AG04449 (cell line): ENCODE measurements at regions of chr9 and their contacts with region 1.

Region 1: DNA sequence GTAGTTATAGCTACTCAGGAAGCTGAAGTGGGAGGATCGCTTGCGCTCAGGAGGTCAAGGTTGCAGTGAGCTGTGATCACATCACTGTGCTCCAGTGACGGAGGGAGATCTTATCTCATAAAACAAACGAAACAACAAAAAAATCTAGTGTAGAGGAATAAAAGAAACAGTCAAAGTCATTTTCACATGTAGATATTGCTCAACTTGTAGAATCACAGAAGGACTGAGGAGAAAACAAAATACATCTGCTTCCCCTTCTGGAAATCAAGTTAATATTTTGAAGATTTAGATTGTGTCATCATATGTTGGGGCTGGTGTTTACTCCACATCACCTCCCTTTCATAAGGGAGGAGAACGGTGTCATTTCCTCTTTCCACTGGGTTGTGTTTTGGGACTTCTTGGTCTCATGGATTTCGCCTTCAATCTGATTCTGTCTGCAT is 8.2 kb upstream of the SLC46A2 start:
- DNase-seq: no peak
- H3K4me3 ChIP-seq: no peak overlapping the region
- CTCF ChIP-seq: no peak

Region 2: GRCh38 chr9:112717661-112718341 is 181.1 kb before region 1 on chr9 and contains the start of gene INIP:
- CTCF ChIA-PET with region 1: interaction called, 16 read pairs
- POLR2A ChIA-PET with region 1: no interaction called
- DNase-seq: peak; percentile 65
- H3K4me3 ChIP-seq: peak within 1 kb of the TSS; percentile 95
- CTCF ChIP-seq: no peak

Region 3: DNA sequence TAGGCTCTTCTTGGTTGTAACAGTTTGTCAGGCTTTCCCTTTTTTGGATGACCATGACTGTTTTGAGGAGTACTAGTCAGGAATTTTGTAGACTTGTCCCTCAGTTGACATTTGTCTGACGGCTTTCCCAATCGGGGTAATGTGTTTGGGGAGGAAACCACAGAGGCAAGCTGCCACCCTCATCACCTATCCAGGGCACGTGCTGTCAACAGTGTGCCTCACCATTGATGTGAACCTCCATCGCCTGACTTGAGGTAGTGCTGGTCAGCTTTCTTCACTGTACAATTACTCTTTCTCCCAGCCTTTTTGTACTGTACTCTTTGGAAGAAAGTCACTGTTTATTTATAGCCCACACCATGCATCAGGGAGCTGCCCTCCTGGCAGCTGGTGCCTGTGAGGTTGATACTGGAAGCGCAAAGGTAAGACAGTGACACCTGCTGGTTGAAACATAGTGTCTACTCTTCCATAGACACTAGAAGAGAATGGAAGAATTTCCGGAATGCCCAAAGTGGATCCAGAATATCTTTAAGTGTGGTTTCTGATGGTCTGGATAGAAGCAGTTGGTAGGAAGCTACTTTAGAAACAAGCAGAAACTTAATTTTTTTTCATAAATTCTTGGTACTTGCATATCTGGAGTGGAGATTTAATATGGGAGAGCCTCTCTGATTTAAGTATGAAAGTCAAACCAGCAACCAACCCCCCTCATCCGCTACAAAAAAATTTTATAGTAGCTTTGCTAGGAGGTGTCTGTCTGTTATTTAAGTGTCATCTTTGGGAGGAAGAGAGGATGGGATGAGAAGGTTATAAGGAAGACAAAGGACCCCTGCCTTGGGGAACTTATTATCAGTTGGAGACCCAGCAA is 79.0 kb before region 1 on chr9:
- CTCF ChIA-PET with region 1: interaction called, 12 read pairs
- POLR2A ChIA-PET with region 1: no interaction called
- DNase-seq: peak; percentile 29
- H3K4me3 ChIP-seq: no peak overlapping the region
- CTCF ChIP-seq: peak; percentile 34

Region 4: DNA sequence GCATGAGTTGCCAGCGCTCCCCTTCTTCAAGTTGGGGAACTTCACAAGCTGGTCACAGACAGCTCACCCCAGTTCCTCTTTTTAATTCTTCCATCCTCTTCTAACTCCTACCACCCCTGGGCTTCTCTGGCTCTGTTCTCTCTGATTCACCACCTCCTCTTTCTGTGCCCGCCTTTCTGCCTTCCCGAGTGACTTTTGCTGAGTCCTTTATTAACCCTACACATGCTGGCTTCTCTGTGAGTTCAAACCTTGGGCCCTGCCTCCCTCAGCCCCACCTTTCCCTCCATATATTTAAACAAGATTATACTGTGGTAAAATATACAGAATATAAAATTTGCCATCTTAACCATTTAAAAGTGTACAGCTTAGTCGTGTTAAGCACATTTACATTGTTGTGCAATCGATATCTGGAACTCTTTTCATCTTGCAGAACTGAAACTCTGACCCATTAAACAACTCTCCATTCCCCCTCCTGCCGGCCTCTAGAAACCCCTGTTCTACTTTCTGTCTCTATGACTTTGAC is 40.2 kb before region 1 on chr9:
- CTCF ChIA-PET with region 1: interaction called, 19 read pairs
- POLR2A ChIA-PET with region 1: no interaction called
- DNase-seq: no peak
- H3K4me3 ChIP-seq: no peak overlapping the region
- CTCF ChIP-seq: no peak

Region 5: DNA sequence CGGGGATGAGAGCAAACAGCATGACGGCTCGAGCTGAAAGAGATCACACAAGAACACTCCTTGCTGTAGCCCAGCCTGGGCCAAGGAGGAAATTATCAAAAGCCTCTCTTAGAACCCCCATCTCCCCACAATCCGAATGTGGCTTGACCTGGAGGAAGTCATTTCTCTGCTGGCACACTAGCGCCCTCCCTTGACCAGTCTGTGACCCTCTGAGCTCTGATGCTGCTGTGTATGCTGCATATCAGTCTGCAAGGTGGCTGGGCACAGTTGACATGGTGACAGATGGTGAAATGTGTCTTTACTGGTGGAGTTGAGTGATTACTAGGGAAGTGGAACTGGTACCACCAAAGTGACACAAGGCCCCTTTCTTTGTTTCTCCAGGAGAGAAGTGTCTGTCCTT is 11.5 kb before region 1 on chr9:
- CTCF ChIA-PET with region 1: interaction called, 67 read pairs
- POLR2A ChIA-PET with region 1: no interaction called
- DNase-seq: no peak
- H3K4me3 ChIP-seq: no peak overlapping the region
- CTCF ChIP-seq: no peak

Region 6: GRCh38 chr9:112921549-112921948 is 22.7 kb after region 1 on chr9:
- CTCF ChIA-PET with region 1: interaction called, 49 read pairs
- POLR2A ChIA-PET with region 1: no interaction called
- DNase-seq: peak; percentile 23
- H3K4me3 ChIP-seq: no peak overlapping the region
- CTCF ChIP-seq: peak; percentile 51

Region 7: DNA sequence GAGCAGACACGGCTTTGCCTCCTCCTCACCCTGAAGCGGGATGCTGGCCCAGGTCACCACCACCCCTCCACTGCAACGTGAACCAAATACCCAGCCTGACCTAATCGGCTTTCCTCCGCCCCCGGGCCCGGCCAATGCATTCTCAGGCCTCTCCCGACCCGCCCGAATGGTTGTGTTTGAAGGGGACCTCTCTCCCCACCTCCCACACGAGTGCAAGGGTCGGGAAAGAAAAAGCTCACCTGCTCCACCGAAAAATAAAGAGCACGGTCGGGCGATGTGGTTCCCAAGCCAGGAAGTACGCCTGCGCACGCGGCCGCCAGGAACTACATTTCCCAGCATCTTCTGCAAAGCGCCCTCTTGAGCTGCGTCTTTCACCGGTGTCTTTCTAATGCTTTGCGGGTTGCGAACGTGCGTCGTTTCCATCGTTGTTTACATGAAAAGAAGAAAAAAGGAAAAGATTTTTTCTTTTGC is 113.1 kb after region 1 on chr9 and contains the start of gene ZNF883:
- CTCF ChIA-PET with region 1: no interaction called
- POLR2A ChIA-PET with region 1: no interaction called
- DNase-seq: no peak
- H3K4me3 ChIP-seq: peak within 1 kb of the TSS; percentile 49
- CTCF ChIP-seq: peak; percentile 9